GM10248 (cell line): ENCODE measurements at regions of chr1 and their contacts with region 1.

Region 1: GRCh38 chr1:40072142-40072541 is 24.9 kb downstream of the PPT1 start:
- DNase-seq: no peak
- CTCF ChIP-seq: no peak

Region 2: DNA sequence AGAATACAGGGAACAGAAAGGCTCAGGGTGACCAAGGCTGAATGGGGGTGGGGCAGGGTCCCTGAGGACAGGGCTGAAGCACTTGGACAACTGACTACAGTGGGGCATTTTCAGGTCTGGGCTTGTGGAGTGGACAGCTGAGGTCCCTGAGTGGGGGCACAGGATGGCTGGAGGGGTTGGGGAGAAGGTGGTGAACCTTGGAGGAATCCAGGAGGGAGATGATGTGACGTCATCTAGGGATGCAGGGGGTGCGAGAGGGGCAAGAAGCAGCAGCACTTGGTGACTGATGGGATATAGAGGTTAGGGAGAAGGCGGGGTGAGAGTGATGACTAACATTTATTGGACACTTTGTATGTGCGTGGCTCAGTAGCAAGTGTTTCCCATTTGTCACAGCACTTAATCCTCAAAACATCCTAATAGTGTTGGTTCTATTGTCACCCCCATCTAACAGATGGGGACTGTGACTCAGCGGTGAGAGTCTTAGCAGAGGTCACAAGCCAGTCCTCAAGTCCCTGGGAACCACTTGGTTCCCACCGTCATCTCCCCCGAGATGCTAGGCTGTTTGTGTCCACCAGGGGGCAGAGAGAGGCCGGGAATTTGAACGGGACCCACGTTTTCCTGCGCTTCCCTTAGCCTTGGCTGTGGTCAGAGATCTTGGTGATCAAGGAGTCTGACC is 255.6 kb before region 1 on chr1:
- CTCF ChIA-PET with region 1: no interaction called
- POLR2A ChIA-PET with region 1: no interaction called
- DNase-seq: peak; percentile 79
- CTCF ChIP-seq: peak; percentile 67

Region 3: GRCh38 chr1:40059338-40059959 is 12.7 kb before region 1 on chr1:
- CTCF ChIA-PET with region 1: interaction called, 61 read pairs
- POLR2A ChIA-PET with region 1: no interaction called
- DNase-seq: no peak
- CTCF ChIP-seq: peak; percentile 32

Region 4: GRCh38 chr1:40352126-40352525 is 280.0 kb after region 1 on chr1:
- CTCF ChIA-PET with region 1: no interaction called
- POLR2A ChIA-PET with region 1: no interaction called
- DNase-seq: peak; percentile 52
- CTCF ChIP-seq: no peak